Activated CD4-positive, alpha-beta T cell treated with anti-CD3 and anti-CD28 coated beads for 36 hours (primary cell): ENCODE measurements at regions of chr2 and their contacts with region 1.

Region 1: DNA sequence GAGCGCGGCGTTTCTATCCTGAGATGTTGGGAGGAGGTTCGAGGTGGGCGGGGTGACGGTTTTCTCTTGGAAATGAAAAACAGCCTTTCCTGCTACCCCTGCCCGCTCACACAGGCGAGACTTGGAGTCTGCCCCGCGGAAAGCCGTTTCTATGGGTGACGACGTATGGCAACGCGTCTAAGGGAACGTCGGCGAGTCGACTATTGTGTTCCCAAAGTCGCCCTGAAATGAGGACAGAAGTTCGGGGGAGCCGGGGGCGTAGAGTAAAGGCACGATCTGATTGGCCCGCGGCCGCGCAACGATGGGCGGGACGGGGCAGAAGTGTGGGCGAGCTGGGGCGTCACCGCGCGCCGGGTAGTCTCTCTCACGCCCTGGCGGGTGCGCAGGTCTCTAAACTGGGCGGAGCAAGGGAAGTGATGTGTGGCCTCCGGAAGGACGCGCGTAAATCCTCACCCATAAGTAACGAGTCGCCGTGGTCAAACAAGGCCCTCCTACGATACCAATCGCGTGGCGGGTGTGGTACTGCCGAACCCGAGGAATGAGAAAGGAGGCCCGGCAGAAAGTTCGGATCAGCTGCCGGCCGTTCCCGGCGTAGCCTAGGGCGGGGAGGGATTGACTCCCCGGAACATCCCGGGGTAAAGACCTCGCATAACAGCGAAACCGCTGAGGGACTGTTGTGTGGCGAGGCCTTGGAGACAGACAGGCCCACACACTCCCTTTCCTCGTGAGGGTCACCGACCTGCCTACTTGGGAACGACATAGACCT is 89.6 kb downstream of the FAM161A start:
- DNase-seq: peak; percentile 99
- ATAC-seq: peak; percentile 97
- H3K4me3 Mint-ChIP-seq: peak overlapping the region; percentile 93
- H3K27ac Mint-ChIP-seq: peak overlapping the region; percentile 95
- H3K4me1 Mint-ChIP-seq: peaks cover 15% of the 10 kb centered on the region
- H3K27me3 Mint-ChIP-seq: no peaks in the 10 kb centered on the region

Region 2: DNA sequence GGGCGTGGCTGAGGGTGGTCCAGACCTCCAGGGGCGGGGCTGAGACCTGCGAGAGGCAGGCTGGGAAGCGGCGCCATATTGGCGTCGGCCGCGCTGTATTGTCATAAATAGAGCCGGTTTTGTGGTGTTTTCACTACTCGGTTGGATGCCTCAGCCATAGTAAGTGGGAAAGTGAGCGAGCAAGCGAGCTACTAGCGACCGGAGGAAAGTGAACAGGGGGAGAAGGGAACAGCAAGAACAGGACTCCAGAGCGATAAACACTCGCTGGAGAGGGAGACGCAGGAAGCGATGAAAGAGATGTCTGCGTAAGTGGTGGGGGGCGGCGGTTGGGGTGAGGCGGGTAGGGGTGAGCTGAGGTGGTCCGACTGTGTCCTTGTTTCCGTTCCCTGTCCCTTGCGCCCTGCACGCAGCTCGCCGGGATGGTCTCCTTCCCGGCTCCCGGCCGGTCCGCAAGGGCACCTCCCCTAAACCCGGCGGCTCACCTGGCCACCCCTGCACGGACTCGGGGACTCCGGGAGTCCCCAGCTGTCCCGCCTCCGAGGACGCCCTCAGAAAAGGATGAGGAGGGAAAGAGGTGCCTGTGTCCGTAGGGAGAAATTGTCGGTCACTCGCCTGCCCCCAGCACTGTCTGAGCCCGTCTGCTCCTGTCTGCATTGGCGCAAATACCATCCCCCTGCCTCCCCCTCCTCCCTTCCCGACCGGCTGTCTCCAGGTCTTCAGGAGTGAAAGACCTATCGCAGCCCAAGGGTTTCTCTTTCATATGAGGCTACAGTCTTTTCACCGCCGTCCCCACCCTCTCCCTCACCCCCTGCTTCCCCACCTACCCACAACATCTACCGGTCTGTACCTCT is 1007.8 kb before region 1 on chr2 and contains the start of gene PAPOLG:
- CTCF ChIA-PET with region 1: no interaction called
- POLR2A ChIA-PET with region 1: no interaction called
- intact Hi-C with region 1: loop called in 1 of 2 experiments (anchors 1 kb)
- DNase-seq: peak; percentile 99
- ATAC-seq: peak; percentile 98
- H3K4me3 Mint-ChIP-seq: peak within 1 kb of the TSS; percentile 99
- H3K27ac Mint-ChIP-seq: peak within 1 kb of the TSS; percentile 100
- H3K4me1 Mint-ChIP-seq: peaks cover 34% of the 10 kb centered on the region
- H3K27me3 Mint-ChIP-seq: no peaks in the 10 kb centered on the region
- total RNA-seq, gene PAPOLG: 13.8 to 14.2 TPM

Region 3: DNA sequence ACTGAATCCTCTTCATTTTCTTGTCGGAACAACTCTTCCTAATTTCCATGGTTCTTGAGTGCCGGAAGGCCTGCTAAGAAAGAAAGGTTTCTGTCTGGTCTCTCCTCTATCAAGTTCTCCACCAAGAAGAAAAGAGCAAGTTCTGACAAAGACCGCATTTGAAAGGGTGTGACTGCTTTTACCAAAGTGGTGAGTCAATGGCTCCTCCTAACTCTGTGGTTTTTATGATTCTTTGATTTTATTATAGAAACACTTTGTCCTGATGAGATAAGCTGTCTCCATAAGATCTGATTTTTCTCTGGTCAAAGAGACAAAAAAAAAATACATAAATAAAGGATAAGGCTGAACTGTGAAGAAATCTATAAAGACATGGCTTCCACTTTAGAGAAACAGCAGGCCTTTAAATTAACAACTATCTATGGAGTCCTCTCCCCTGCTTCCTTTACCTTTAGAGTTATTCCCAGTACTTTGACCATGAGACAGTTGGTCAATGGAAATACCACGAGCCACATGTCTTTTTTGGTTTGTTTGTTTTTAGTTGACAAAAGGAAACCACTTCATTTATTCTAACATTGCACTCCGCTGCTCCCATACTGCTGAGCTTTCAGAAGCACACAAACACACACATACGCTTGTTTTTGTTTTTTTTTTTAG is 815.2 kb before region 1 on chr2:
- CTCF ChIA-PET with region 1: no interaction called
- POLR2A ChIA-PET with region 1: no interaction called
- intact Hi-C with region 1: no loop called
- DNase-seq: no peak
- ATAC-seq: peak; percentile 66
- H3K4me3 Mint-ChIP-seq: no peak overlapping the region
- H3K27ac Mint-ChIP-seq: no peak overlapping the region
- H3K4me1 Mint-ChIP-seq: peaks cover 15% of the 10 kb centered on the region
- H3K27me3 Mint-ChIP-seq: no peaks in the 10 kb centered on the region

Region 4: GRCh38 chr2:61176755-61177726 is 587.2 kb before region 1 on chr2:
- CTCF ChIA-PET with region 1: no interaction called
- POLR2A ChIA-PET with region 1: no interaction called
- intact Hi-C with region 1: loop called (anchors 1 to 5 kb)
- DNase-seq: peak; percentile 97
- ATAC-seq: peak; percentile 90
- H3K4me3 Mint-ChIP-seq: peak overlapping the region; percentile 86
- H3K27ac Mint-ChIP-seq: peak overlapping the region; percentile 76
- H3K4me1 Mint-ChIP-seq: peaks cover 46% of the 10 kb centered on the region
- H3K27me3 Mint-ChIP-seq: no peaks in the 10 kb centered on the region

Region 5: DNA sequence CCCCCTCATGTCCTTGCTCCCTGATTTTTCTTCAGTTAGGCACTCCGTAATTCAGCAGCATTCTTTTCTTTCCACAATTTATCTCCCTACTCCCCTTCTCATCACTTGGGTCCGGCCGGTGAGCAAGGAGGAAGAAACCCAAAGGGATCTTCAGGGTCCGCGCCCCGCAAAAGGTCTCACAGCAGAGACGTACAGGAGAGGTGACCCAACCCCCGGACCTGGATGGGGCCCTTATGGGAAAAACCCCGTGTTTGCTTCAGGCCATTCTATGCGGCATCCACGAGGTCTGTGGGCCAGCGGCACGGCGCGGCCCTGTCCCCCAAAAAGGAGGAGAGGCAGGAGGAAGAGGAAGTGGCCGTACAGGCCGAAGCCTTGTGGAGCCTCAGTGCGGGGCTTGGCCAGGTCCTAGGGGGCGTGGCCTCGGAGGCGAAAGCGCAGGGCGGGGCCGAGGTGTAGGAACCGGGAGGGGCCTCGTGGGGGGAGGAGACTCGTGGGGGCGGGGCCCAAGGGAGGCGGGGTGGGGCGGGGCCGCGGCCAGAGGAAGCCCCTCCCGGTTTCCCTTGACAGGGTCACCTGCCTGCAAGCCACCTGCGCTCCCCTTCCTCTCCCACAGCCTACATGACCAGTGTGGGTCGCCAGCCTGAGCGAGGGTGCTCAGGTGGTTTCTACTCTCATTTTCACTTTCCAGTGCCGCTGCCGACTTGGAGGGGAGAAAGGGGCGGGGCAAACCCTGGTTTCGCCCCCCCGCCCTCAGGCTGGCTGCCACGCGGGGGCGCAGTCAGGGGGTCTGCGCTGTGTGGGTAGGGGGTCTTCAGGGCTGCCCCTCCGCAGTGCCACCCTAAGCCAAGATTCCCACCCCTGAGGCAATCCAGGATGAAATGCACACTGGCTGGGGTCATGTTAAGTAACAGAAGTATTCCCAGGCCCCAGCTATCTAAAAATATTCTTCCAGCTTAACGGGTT is 69.6 kb before region 1 on chr2:
- CTCF ChIA-PET with region 1: no interaction called
- POLR2A ChIA-PET with region 1: no interaction called
- intact Hi-C with region 1: loop called (anchors 1 kb)
- DNase-seq: peak; percentile 93
- ATAC-seq: peak; percentile 98
- H3K4me3 Mint-ChIP-seq: peak overlapping the region; percentile 80
- H3K27ac Mint-ChIP-seq: peak overlapping the region; percentile 86
- H3K4me1 Mint-ChIP-seq: peaks cover 14% of the 10 kb centered on the region
- H3K27me3 Mint-ChIP-seq: no peaks in the 10 kb centered on the region

Region 6: GRCh38 chr2:61905372-61906185 is 141.4 kb after region 1 on chr2 and contains the start of gene COMMD1:
- CTCF ChIA-PET with region 1: no interaction called
- POLR2A ChIA-PET with region 1: no interaction called
- intact Hi-C with region 1: loop called in 1 of 2 experiments (anchors 1 kb)
- DNase-seq: peak; percentile 93
- ATAC-seq: peak; percentile 99
- H3K4me3 Mint-ChIP-seq: peak within 1 kb of the TSS; percentile 96
- H3K27ac Mint-ChIP-seq: peak within 1 kb of the TSS; percentile 80
- H3K4me1 Mint-ChIP-seq: peaks cover 9% of the 10 kb centered on the region
- H3K27me3 Mint-ChIP-seq: no peaks in the 10 kb centered on the region
- total RNA-seq, gene COMMD1: 29.3 to 36.1 TPM

Region 7: DNA sequence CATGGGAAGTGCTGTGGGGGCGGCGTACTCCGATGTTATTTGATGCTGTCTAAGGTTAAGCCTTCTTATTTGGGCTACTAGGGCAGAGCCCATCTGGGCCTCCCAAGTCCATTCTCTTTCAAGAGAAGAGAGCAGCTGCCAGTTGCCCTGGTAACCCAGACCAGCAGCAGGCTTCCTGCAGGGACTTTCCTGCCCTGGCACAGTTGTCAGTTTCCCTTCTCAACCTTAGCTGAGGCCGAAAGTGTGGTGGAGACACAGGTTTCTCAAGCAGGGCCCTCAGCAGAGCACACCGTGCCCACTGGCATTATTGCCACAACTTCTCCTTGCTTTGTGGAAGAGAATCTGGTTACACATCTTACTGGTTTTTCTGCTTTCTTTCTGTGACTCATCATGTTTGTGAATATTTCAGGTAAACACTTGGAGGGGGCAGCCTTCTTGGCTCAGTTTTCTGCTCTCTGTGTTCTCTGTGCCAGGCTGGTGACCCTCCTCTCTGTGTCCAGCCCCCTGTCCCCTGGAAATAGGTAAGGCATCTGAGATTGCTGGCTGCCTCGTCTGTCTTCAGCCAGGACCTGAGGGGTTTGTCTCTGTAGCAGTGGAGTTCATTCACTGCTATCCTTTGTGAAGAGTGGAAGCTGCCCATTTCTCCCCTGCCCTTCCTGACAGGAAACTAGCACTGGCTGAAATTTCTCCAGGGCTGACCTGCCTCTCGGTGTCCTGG is 542.7 kb after region 1 on chr2:
- CTCF ChIA-PET with region 1: no interaction called
- POLR2A ChIA-PET with region 1: no interaction called
- intact Hi-C with region 1: loop called in 1 of 2 experiments (anchors 2 kb)
- DNase-seq: peak; percentile 69
- ATAC-seq: peak; percentile 20
- H3K4me3 Mint-ChIP-seq: no peak overlapping the region
- H3K27ac Mint-ChIP-seq: peak overlapping the region; percentile 79
- H3K4me1 Mint-ChIP-seq: peaks cover 72% of the 10 kb centered on the region
- H3K27me3 Mint-ChIP-seq: no peaks in the 10 kb centered on the region